Activated CD4-positive, alpha-beta T cell treated with anti-CD3 and anti-CD28 coated beads, Interleukin-2, amount 10 ng/mL, durations not matched to agents 24 days and 14 days (primary cell): ENCODE measurements at regions of chr13 and their contacts with region 1.

Region 1: GRCh38 chr13:51452361-51453206 is at the start of gene INTS6:
- DNase-seq: peak; percentile 100
- H3K4me3 Mint-ChIP-seq: peak within 1 kb of the TSS; percentile 92
- H3K27ac Mint-ChIP-seq: peak within 1 kb of the TSS; percentile 97
- H3K4me1 Mint-ChIP-seq: peaks cover 31% of the 10 kb centered on the region
- H3K27me3 Mint-ChIP-seq: no peaks in the 10 kb centered on the region
- total RNA-seq, gene INTS6: 63.5 and 68.6 TPM in 2 replicates

Region 2: DNA sequence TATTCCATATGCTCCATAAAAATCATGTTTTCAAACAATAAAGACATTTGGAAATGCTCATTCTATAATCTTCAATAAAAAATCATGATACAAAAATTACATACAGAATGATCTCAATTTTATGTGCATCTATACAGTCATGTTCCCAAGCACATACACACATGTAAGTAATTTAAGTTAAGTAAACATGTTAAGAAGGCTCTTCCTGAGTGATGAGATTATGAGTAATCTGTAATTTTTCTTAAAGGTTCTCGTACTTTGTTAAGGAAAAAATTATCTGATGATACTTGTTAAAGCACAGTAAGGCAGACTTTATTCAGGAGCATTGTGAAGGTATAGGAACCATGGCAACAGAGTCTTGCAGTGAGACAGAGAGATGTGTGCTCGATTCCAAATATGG is 579.1 kb before region 1 on chr13:
- intact Hi-C with region 1: no loop called
- DNase-seq: no peak
- H3K4me3 Mint-ChIP-seq: no peak overlapping the region
- H3K27ac Mint-ChIP-seq: no peak overlapping the region
- H3K4me1 Mint-ChIP-seq: no peaks in the 10 kb centered on the region
- H3K27me3 Mint-ChIP-seq: peaks cover 20% of the 10 kb centered on the region

Region 3: GRCh38 chr13:51330791-51331190 is 121.8 kb before region 1 on chr13:
- intact Hi-C with region 1: loop called (anchors 5 kb)
- DNase-seq: no peak
- H3K4me3 Mint-ChIP-seq: peak overlapping the region; percentile 43
- H3K27ac Mint-ChIP-seq: peak overlapping the region; percentile 60
- H3K4me1 Mint-ChIP-seq: peaks cover 18% of the 10 kb centered on the region
- H3K27me3 Mint-ChIP-seq: no peaks in the 10 kb centered on the region

Region 4: GRCh38 chr13:51502153-51502651 is 49.6 kb after region 1 on chr13:
- intact Hi-C with region 1: loop called (anchors 2 kb)
- DNase-seq: no peak
- H3K4me3 Mint-ChIP-seq: no peak overlapping the region
- H3K27ac Mint-ChIP-seq: peak overlapping the region; percentile 34
- H3K4me1 Mint-ChIP-seq: peaks cover 15% of the 10 kb centered on the region
- H3K27me3 Mint-ChIP-seq: peaks cover 7% of the 10 kb centered on the region

Region 5: GRCh38 chr13:51764184-51765141 is 311.9 kb after region 1 on chr13:
- intact Hi-C with region 1: loop called (anchors 1 kb)
- DNase-seq: peak; percentile 86
- H3K4me3 Mint-ChIP-seq: peak overlapping the region; percentile 88
- H3K27ac Mint-ChIP-seq: peak overlapping the region; percentile 96
- H3K4me1 Mint-ChIP-seq: peaks cover 39% of the 10 kb centered on the region
- H3K27me3 Mint-ChIP-seq: no peaks in the 10 kb centered on the region

Region 6: GRCh38 chr13:51825165-51825592 is 372.6 kb after region 1 on chr13:
- intact Hi-C with region 1: loop called (anchors 1 kb)
- DNase-seq: peak; percentile 79
- H3K4me3 Mint-ChIP-seq: peak overlapping the region; percentile 73
- H3K27ac Mint-ChIP-seq: peak overlapping the region; percentile 84
- H3K4me1 Mint-ChIP-seq: peaks cover 64% of the 10 kb centered on the region
- H3K27me3 Mint-ChIP-seq: peaks cover 3% of the 10 kb centered on the region

Region 7: GRCh38 chr13:52652196-52652979 is 1199.8 kb after region 1 on chr13 and contains the start of gene SUGT1:
- intact Hi-C with region 1: loop called (anchors 2 kb)
- DNase-seq: peak; percentile 98
- H3K4me3 Mint-ChIP-seq: no peak within 1 kb of the TSS
- H3K27ac Mint-ChIP-seq: no peak within 1 kb of the TSS
- H3K4me1 Mint-ChIP-seq: peaks cover 15% of the 10 kb centered on the region
- H3K27me3 Mint-ChIP-seq: no peaks in the 10 kb centered on the region
- total RNA-seq, gene SUGT1: 71.2 and 77.8 TPM in 2 replicates